ENCODE measurements at regions of chr19 and their contacts with region 1.

Region 1: GRCh38 chr19:14871619-14872230 is 14.2 kb downstream of the OR7A17 start:
- DNase-seq: peak; percentile 62
- ATAC-seq: peak; percentile 36
- H3K4me3 ChIP-seq: no peak overlapping the region
- H3K4me3 Mint-ChIP-seq: no peak overlapping the region
- H3K27ac ChIP-seq: no peak overlapping the region
- H3K27ac Mint-ChIP-seq: no peak overlapping the region
- H3K4me1 ChIP-seq: no peaks in the 10 kb centered on the region
- H3K4me1 Mint-ChIP-seq: no peaks in the 10 kb centered on the region
- H3K27me3 ChIP-seq: peaks cover 0 to 6% (median 0%) of the 10 kb centered on the region in 4 experiments
- H3K27me3 Mint-ChIP-seq: peaks cover 43% of the 10 kb centered on the region
- CTCF ChIP-seq: peak; percentile 80

Region 2: GRCh38 chr19:14031719-14032480 is 839.8 kb before region 1 on chr19 and contains the start of gene IL27RA:
- CTCF ChIA-PET with region 1: no interaction called
- POLR2A ChIA-PET with region 1: no interaction called
- intact Hi-C with region 1: no loop called
- DNase-seq: peak; percentile 84
- ATAC-seq: peak; percentile 72
- H3K4me3 ChIP-seq: peak within 1 kb of the TSS; percentile 26 to 95 (median 83)
- H3K4me3 Mint-ChIP-seq: peak within 1 kb of the TSS; percentile 94
- H3K27ac ChIP-seq: peak within 1 kb of the TSS; percentile 83 to 94
- H3K27ac Mint-ChIP-seq: peak within 1 kb of the TSS; percentile 94
- H3K4me1 ChIP-seq: peaks cover 22 to 42% of the 10 kb centered on the region in 2 donors
- H3K4me1 Mint-ChIP-seq: peaks cover 38% of the 10 kb centered on the region
- H3K27me3 ChIP-seq: no peaks in the 10 kb centered on the region
- H3K27me3 Mint-ChIP-seq: no peaks in the 10 kb centered on the region
- CTCF ChIP-seq: peak; percentile 68
- total RNA-seq, gene IL27RA: 38.2 and 38.6 TPM in 2 replicates

Region 3: GRCh38 chr19:14059093-14059480 is 812.6 kb before region 1 on chr19:
- CTCF ChIA-PET with region 1: no interaction called
- POLR2A ChIA-PET with region 1: no interaction called
- intact Hi-C with region 1: no loop called
- DNase-seq: peak; percentile 68
- ATAC-seq: no peak
- H3K4me3 ChIP-seq: no peak overlapping the region
- H3K4me3 Mint-ChIP-seq: no peak overlapping the region
- H3K27ac ChIP-seq: no peak overlapping the region
- H3K27ac Mint-ChIP-seq: no peak overlapping the region
- H3K4me1 ChIP-seq: peaks cover 18 to 22% of the 10 kb centered on the region in 2 donors
- H3K4me1 Mint-ChIP-seq: peaks cover 18% of the 10 kb centered on the region
- H3K27me3 ChIP-seq: peaks cover 0 to 54% (median 28%) of the 10 kb centered on the region in 4 experiments
- H3K27me3 Mint-ChIP-seq: peaks cover 37% of the 10 kb centered on the region
- CTCF ChIP-seq: peak; percentile 81

Region 4: DNA sequence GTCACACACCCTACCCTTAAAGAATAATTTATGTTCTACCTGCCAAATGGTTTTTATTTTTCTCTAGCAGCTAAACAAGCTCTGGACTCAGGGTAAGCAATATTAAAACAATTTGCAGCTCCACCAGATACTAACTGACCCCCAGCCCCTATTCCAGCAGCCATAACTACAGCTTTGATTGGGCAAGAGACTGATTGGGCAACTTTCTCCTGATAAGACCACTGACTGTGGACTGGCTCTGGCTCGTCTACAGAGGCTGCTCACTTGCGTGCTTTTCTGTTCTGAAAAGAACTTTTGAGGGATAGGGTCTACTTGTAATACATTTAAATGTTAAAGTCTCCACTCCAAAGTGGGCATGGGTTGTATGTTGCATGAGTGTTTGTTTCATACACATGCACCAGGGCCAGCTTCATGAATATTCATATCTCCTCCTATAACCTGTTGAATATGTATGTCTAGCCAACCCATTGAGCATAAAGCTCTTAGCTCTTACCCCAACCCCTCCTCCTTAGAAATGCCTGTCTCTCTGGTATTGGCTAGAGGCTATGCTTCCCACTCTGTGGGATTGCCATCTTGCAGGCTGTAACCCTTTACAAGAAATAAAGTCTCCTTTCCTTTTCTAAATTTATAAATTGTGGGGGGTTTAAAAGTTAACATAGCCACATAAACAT is 56.6 kb before region 1 on chr19:
- CTCF ChIA-PET with region 1: no interaction called
- POLR2A ChIA-PET with region 1: no interaction called
- intact Hi-C with region 1: no loop called
- DNase-seq: no peak
- ATAC-seq: no peak
- H3K4me3 ChIP-seq: no peak overlapping the region
- H3K4me3 Mint-ChIP-seq: no peak overlapping the region
- H3K27ac ChIP-seq: no peak overlapping the region
- H3K27ac Mint-ChIP-seq: no peak overlapping the region
- H3K4me1 ChIP-seq: no peaks in the 10 kb centered on the region
- H3K4me1 Mint-ChIP-seq: no peaks in the 10 kb centered on the region
- H3K27me3 ChIP-seq: no peaks in the 10 kb centered on the region
- H3K27me3 Mint-ChIP-seq: peaks cover 5% of the 10 kb centered on the region
- CTCF ChIP-seq: no peak

Region 5: DNA sequence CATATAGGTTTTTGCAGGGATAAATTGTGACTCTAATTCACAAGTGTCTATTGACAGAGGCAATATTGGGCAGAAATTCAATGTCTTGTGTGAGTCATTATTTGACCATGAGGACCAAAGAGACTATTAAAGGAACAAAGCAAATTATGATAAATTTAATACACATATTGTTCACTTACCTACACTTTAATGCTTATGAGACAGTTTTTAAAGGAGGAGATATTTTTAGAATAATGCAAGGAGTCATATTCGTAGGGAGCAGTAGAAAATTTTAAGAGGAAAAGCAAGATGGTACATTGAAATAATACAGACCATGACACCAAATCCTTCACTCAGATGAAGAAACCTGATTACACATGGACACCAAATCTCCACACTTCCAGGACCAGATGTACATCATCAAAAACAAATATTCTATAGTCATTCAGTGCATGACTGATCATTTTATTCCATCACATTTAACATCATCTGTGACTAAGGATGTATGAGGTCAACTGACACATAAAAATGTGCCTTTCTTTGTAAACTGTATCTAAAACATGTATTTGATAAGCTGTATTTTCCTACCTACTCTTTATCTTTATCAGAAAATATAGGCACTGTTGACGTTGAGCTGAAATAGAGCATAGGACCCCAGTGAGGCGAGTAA is 18.4 kb after region 1 on chr19:
- CTCF ChIA-PET with region 1: no interaction called
- POLR2A ChIA-PET with region 1: no interaction called
- intact Hi-C with region 1: loop called (anchors 2 kb)
- DNase-seq: no peak
- ATAC-seq: no peak
- H3K4me3 ChIP-seq: no peak overlapping the region
- H3K4me3 Mint-ChIP-seq: no peak overlapping the region
- H3K27ac ChIP-seq: peak overlapping the region in 1 of 2 donors; percentile 78
- H3K27ac Mint-ChIP-seq: peak overlapping the region; percentile 82
- H3K4me1 ChIP-seq: peaks cover 17% of the 10 kb centered on the region in 2 donors
- H3K4me1 Mint-ChIP-seq: peaks cover 33% of the 10 kb centered on the region
- H3K27me3 ChIP-seq: peaks cover 0 to 7% (median 1%) of the 10 kb centered on the region in 4 experiments
- H3K27me3 Mint-ChIP-seq: peaks cover 20% of the 10 kb centered on the region
- CTCF ChIP-seq: no peak

Region 6: DNA sequence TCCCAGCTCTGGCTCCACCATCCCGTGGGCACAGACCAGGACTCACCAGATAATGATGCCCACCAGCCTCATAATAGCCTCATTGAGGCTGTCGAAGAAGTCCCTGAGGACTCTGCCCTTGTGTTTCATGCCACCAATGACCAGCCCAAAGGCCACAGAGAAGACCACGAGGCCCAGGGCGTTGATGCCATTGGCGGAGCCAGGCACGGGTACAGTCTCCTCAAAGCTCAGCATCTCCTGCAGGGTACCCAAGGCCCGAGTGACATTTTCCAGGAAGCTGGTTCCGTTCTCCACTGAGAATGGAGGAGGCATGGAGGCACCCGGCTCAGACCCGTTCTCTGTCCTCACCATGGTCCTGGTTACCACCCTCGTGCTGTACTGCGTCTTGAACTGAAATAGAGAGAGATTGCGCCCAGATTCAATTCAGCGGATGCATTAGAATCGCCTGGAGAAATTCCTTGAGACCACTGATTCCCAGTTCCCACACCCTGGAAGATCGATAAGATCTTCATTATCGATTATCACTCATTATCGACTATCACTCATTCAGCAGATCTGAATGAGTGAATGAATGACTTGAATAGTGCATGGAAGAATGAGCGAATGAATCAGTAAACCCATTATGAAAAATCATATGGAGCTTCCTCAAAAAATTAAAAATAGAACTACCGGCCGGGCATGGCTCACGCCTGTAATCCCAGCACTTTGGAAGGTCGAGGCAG is 90.4 kb after region 1 on chr19:
- CTCF ChIA-PET with region 1: no interaction called
- POLR2A ChIA-PET with region 1: no interaction called
- intact Hi-C with region 1: no loop called
- DNase-seq: no peak
- ATAC-seq: no peak
- H3K4me3 ChIP-seq: no peak overlapping the region
- H3K4me3 Mint-ChIP-seq: no peak overlapping the region
- H3K27ac ChIP-seq: no peak overlapping the region
- H3K27ac Mint-ChIP-seq: no peak overlapping the region
- H3K4me1 ChIP-seq: no peaks in the 10 kb centered on the region
- H3K4me1 Mint-ChIP-seq: no peaks in the 10 kb centered on the region
- H3K27me3 ChIP-seq: peaks cover 0 to 2% (median 0%) of the 10 kb centered on the region in 4 experiments
- H3K27me3 Mint-ChIP-seq: peaks cover 5% of the 10 kb centered on the region
- CTCF ChIP-seq: no peak

Region 7: GRCh38 chr19:15028490-15028889 is 156.8 kb after region 1 on chr19:
- CTCF ChIA-PET with region 1: interaction called, 3 read pairs
- POLR2A ChIA-PET with region 1: no interaction called
- intact Hi-C with region 1: loop called (anchors 5 kb)
- DNase-seq: no peak
- ATAC-seq: no peak
- H3K4me3 ChIP-seq: no peak overlapping the region
- H3K4me3 Mint-ChIP-seq: no peak overlapping the region
- H3K27ac ChIP-seq: no peak overlapping the region
- H3K27ac Mint-ChIP-seq: no peak overlapping the region
- H3K4me1 ChIP-seq: no peaks in the 10 kb centered on the region
- H3K4me1 Mint-ChIP-seq: no peaks in the 10 kb centered on the region
- H3K27me3 ChIP-seq: no peaks in the 10 kb centered on the region
- H3K27me3 Mint-ChIP-seq: peaks cover 16% of the 10 kb centered on the region
- CTCF ChIP-seq: no peak